AG04450 (cell line): ENCODE measurements at regions of chr13 and their contacts with region 1.

Region 1: DNA sequence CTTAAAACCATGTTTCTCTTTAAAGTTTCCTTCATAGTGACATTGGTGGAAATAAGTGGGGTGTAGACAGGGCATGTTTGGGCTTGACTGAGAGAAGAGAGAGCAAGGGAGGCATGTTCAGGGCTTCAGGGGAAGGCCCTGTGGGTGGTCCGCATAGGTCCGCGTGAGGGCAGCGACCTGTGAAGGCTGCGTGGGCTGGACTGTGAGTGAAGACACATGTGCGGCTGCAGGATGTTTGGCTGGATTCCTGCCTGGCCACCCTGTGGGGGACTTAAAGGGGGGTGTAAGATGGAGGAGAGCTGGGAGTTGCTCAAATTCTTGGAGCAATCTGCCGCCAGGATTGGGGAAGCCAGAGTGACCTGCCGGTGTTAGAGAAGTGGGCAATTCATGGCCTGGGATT is 23.8 kb upstream of the KLF12 start:
- DNase-seq: peak; percentile 11
- H3K4me3 ChIP-seq: no peak overlapping the region
- H3K27ac ChIP-seq: no peak overlapping the region
- H3K27me3 ChIP-seq: no peaks in the 10 kb centered on the region
- CTCF ChIP-seq: no peak

Region 2: DNA sequence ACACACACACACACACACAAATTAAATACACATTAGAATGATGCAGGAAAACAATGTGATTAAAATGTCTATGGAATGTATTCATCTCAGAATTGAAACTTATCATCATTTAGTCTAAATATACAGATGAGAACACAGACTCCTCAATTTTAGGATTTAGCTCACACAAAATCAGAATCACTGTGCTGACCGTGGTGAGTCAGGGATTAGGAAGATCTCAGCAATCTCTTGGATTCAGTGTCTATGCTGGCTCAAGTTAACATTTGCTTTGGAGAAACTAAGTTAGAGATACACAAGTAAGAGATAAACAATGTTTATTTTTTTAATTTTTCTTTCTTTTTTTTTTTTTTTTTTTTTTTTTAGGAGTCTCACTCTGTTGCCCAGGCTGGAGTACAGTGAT is 347.4 kb before region 1 on chr13:
- CTCF ChIA-PET with region 1: no interaction called
- POLR2A ChIA-PET with region 1: interaction called, 10 read pairs
- DNase-seq: no peak
- H3K4me3 ChIP-seq: no peak overlapping the region
- H3K27ac ChIP-seq: no peak overlapping the region
- H3K27me3 ChIP-seq: no peaks in the 10 kb centered on the region
- CTCF ChIP-seq: no peak

Region 3: GRCh38 chr13:74253161-74253560 is 95.1 kb after region 1 on chr13:
- CTCF ChIA-PET with region 1: no interaction called
- POLR2A ChIA-PET with region 1: interaction called, 10 read pairs
- DNase-seq: no peak
- H3K4me3 ChIP-seq: no peak overlapping the region
- H3K27ac ChIP-seq: no peak overlapping the region
- H3K27me3 ChIP-seq: no peaks in the 10 kb centered on the region
- CTCF ChIP-seq: no peak